CD14-positive monocyte (primary cell): ENCODE measurements at regions of chr12 and their contacts with region 1.

Region 1: GRCh38 chr12:103548622-103549601 is 38.2 kb upstream of the STAB2 start:
- DNase-seq: peak; percentile 1 to 40 (median 6)
- H3K4me3 ChIP-seq: no peak overlapping the region
- H3K4me3 Mint-ChIP-seq: no peak overlapping the region
- H3K27ac ChIP-seq: no peak overlapping the region
- H3K27ac Mint-ChIP-seq: no peak overlapping the region
- H3K4me1 ChIP-seq: no peaks in the 10 kb centered on the region
- H3K4me1 Mint-ChIP-seq: no peaks in the 10 kb centered on the region
- H3K27me3 ChIP-seq: no peaks in the 10 kb centered on the region
- H3K27me3 Mint-ChIP-seq: peaks cover 0 to 6% (median 6%) of the 10 kb centered on the region in 3 donors
- CTCF ChIP-seq: peak; percentile 79

Region 2: DNA sequence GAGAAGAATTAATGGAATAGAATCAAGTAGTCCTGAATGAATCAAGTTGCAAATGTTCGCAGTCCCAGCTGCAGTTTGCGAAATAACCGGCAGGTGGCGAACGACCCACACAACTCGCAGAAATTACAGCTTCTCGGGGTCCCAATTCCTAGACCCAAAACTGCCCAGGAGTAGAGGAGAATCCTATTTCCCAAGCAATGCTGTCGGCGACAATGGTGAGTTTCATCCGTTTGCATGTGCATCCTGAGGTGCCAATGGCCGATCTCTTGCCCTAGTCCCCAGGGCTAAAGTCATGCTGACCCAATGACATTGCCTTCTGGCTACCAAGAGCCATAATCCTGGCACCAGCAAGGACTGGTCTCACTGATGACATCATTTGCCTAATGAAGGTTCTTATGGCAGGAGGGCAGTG is 600.0 kb before region 1 on chr12:
- intact Hi-C with region 1: loop called (anchors 5 kb)
- DNase-seq: no peak
- H3K4me3 ChIP-seq: no peak overlapping the region
- H3K4me3 Mint-ChIP-seq: no peak overlapping the region
- H3K27ac ChIP-seq: no peak overlapping the region
- H3K27ac Mint-ChIP-seq: no peak overlapping the region
- H3K4me1 ChIP-seq: no peaks in the 10 kb centered on the region
- H3K4me1 Mint-ChIP-seq: no peaks in the 10 kb centered on the region
- H3K27me3 ChIP-seq: peaks cover 20 to 47% of the 10 kb centered on the region in 2 donors
- H3K27me3 Mint-ChIP-seq: peaks cover 40 to 51% (median 44%) of the 10 kb centered on the region in 3 donors
- CTCF ChIP-seq: peak; percentile 94